ENCODE measurements at regions of chr14 and their contacts with region 1.

Region 1: GRCh38 chr14:20613094-20614037 is 22.2 kb upstream of the RNASE12 start:
- DNase-seq: peak; percentile 65 to 95 (median 78)
- ATAC-seq: peak; percentile 83
- H3K4me3 ChIP-seq: peak overlapping the region; percentile 64
- H3K4me3 Mint-ChIP-seq: no peak overlapping the region
- H3K27ac ChIP-seq: peak overlapping the region in 1 of 2 donors; percentile 43
- H3K27ac Mint-ChIP-seq: no peak overlapping the region
- H3K4me1 ChIP-seq: peaks cover 37% of the 10 kb centered on the region
- H3K4me1 Mint-ChIP-seq: no peaks in the 10 kb centered on the region
- H3K27me3 ChIP-seq: no peaks in the 10 kb centered on the region
- H3K27me3 Mint-ChIP-seq: peaks cover 7% of the 10 kb centered on the region
- CTCF ChIP-seq: peak; percentile 55

Region 2: DNA sequence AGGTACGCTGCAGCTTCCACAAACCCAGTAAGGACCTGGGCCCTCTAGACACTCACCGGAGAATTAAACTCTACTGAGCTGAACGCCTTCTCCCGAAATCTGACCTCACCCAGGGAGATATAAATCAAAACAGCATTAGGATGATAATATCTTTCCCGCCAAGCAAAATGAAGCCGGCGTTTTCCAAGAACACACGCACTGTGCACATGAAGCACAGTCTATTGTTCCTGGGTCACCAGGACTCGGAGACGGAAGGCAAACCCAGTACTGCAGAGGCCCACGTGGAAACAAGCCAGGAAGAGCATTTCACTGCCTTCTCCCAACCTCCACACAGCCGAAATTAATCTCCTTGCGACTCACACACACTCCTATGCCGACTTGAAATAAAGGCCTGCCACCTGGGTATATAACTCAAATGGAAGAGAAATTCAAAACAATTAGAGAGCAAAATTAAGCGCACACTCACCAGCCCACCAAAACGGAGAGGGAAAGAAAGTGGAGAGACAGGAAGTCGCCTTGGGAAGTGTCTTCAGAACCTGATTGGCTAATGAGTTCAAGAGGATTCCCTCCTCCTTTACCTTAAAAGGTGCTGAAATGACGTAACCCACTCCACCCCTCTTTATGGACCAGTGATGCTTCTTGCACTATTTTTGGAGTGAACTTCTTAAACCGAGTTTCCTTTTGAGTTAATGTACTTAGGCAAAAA is 280.4 kb before region 1 on chr14 and contains the start of gene CCNB1IP1:
- CTCF ChIA-PET with region 1: interaction called, 13 read pairs
- POLR2A ChIA-PET with region 1: interaction called, 19 read pairs
- intact Hi-C with region 1: no loop called
- DNase-seq: peak in 13 of 14 experiments; percentile 5 to 91 (median 26)
- ATAC-seq: peak; percentile 99
- H3K4me3 ChIP-seq: peak within 1 kb of the TSS; percentile 75
- H3K4me3 Mint-ChIP-seq: peak within 1 kb of the TSS; percentile 94
- H3K27ac ChIP-seq: peak within 1 kb of the TSS; percentile 3 to 59
- H3K27ac Mint-ChIP-seq: peak within 1 kb of the TSS; percentile 84
- H3K4me1 ChIP-seq: peaks cover 12% of the 10 kb centered on the region
- H3K4me1 Mint-ChIP-seq: peaks cover 34% of the 10 kb centered on the region
- H3K27me3 ChIP-seq: no peaks in the 10 kb centered on the region
- H3K27me3 Mint-ChIP-seq: no peaks in the 10 kb centered on the region
- CTCF ChIP-seq: no peak
- total RNA-seq, gene CCNB1IP1: 26.2 to 27.4 TPM

Region 3: DNA sequence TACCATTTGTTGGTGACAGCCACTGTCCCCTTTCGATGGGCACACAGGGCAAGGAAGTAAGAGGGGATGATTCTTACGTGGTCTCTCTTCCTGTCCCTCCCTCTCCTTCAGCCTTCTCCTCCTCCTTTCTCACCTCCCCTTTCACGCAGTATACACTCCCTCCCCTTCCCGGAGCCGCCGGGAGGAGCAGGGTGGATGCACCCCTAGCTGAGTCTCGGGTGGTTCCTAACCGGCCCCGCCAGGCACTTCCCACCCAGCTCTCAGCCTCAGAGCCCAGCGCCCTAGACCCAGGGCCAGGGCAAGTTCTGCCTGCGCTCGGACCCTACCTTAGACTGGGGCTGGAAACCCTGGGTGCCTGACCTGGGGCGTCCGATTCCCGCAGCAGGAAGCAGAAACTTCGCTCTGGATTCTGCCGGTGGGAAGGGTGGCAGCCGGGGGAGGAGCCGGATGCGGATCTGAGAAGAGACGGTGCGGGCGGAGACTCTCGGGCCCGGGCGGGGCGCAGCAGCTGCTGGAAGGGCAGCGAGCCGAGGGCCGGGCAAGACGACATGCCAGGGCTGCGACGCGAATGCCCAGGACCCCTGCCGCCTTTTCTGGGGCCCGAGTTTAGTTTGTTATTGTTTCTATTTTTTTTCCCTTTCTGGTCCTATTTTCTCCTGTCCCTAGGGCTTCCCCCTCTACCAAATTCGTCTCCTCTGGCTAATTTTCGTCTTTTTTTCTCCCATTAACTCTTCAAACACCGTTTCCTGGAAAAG is 200.1 kb before region 1 on chr14 and contains the start of gene TEP1:
- CTCF ChIA-PET with region 1: interaction called, 14 read pairs
- POLR2A ChIA-PET with region 1: interaction called, 10 read pairs
- intact Hi-C with region 1: loop called (anchors 1 to 2 kb)
- DNase-seq: peak; percentile 47 to 81 (median 66)
- ATAC-seq: peak; percentile 72
- H3K4me3 ChIP-seq: peak within 1 kb of the TSS; percentile 96
- H3K4me3 Mint-ChIP-seq: peak within 1 kb of the TSS; percentile 98
- H3K27ac ChIP-seq: peak within 1 kb of the TSS; percentile 80 to 90
- H3K27ac Mint-ChIP-seq: peak within 1 kb of the TSS; percentile 80
- H3K4me1 ChIP-seq: peaks cover 19% of the 10 kb centered on the region
- H3K4me1 Mint-ChIP-seq: peaks cover 49% of the 10 kb centered on the region
- H3K27me3 ChIP-seq: no peaks in the 10 kb centered on the region
- H3K27me3 Mint-ChIP-seq: no peaks in the 10 kb centered on the region
- CTCF ChIP-seq: no peak
- total RNA-seq, gene TEP1: 14.3 to 17.4 TPM

Region 4: GRCh38 chr14:20461274-20462001 is 151.9 kb before region 1 on chr14 and contains the start of gene PIP4P1:
- CTCF ChIA-PET with region 1: interaction called, 3 read pairs
- POLR2A ChIA-PET with region 1: interaction called, 10 read pairs
- intact Hi-C with region 1: no loop called
- DNase-seq: peak; percentile 94 to 100 (median 97)
- ATAC-seq: peak; percentile 86
- H3K4me3 ChIP-seq: peak within 1 kb of the TSS; percentile 69
- H3K4me3 Mint-ChIP-seq: peak within 1 kb of the TSS; percentile 95
- H3K27ac ChIP-seq: peak within 1 kb of the TSS; percentile 94 to 97
- H3K27ac Mint-ChIP-seq: peak within 1 kb of the TSS; percentile 87
- H3K4me1 ChIP-seq: peaks cover 41% of the 10 kb centered on the region
- H3K4me1 Mint-ChIP-seq: peaks cover 26% of the 10 kb centered on the region
- H3K27me3 ChIP-seq: no peaks in the 10 kb centered on the region
- H3K27me3 Mint-ChIP-seq: no peaks in the 10 kb centered on the region
- CTCF ChIP-seq: no peak
- total RNA-seq, gene PIP4P1: 83.9 to 107 TPM

Region 5: GRCh38 chr14:20591241-20591640 is 22.1 kb before region 1 on chr14 and contains the start of gene RNASE12:
- CTCF ChIA-PET with region 1: no interaction called
- POLR2A ChIA-PET with region 1: no interaction called
- intact Hi-C with region 1: no loop called
- DNase-seq: no peak
- ATAC-seq: no peak
- H3K4me3 ChIP-seq: no peak within 1 kb of the TSS
- H3K4me3 Mint-ChIP-seq: no peak within 1 kb of the TSS
- H3K27ac ChIP-seq: no peak within 1 kb of the TSS
- H3K27ac Mint-ChIP-seq: no peak within 1 kb of the TSS
- H3K4me1 ChIP-seq: no peaks in the 10 kb centered on the region
- H3K4me1 Mint-ChIP-seq: peaks cover 6% of the 10 kb centered on the region
- H3K27me3 ChIP-seq: peaks cover 0 to 3% of the 10 kb centered on the region in 2 experiments
- H3K27me3 Mint-ChIP-seq: peaks cover 16% of the 10 kb centered on the region
- CTCF ChIP-seq: no peak
- total RNA-seq, gene RNASE12: not detected

Region 6: DNA sequence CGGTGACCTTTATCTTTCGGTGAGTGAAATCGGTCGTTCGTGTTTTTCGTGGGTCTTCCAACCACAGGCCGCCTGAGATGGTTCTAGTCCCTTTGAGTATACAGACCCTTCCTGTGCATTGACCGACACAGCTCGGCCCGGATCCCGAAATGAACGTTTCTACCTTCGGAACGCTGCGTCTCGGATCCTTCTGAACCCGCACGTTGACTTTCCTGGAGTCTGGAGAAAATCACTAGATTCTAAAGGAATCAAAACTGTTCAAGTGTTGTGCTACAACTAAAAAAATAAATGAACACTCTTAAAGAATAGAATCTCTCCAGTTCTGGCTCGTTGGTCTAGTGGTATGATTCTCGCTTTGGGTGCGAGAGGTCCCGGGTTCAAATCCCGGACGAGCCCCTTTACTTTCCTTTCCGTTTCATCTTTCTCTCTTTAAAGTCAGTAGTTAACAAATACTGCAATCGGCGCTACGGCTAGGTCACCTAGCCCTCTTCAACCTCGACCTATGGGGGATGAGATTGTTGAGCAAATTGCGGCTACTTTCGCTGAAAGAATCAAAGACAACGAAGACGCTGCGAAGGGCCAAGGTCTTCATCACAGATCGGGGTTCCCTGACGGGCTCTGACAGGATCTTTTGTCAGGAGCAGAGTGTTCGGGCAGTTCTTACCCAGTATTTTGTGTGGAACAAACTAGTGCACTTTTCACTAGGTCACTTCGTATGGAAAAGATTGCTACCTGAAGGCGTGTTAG is 19.5 kb after region 1 on chr14:
- CTCF ChIA-PET with region 1: interaction called, 13 read pairs
- POLR2A ChIA-PET with region 1: interaction called, 42 read pairs
- intact Hi-C with region 1: loop called (anchors 1 to 2 kb)
- DNase-seq: peak in 11 of 14 experiments; percentile 15 to 84 (median 50)
- ATAC-seq: peak; percentile 58
- H3K4me3 ChIP-seq: peak overlapping the region; percentile 59
- H3K4me3 Mint-ChIP-seq: peak overlapping the region; percentile 97
- H3K27ac ChIP-seq: no peak overlapping the region
- H3K27ac Mint-ChIP-seq: peak overlapping the region; percentile 94
- H3K4me1 ChIP-seq: peaks cover 34% of the 10 kb centered on the region
- H3K4me1 Mint-ChIP-seq: peaks cover 54% of the 10 kb centered on the region
- H3K27me3 ChIP-seq: peaks cover 0 to 7% of the 10 kb centered on the region in 2 experiments
- H3K27me3 Mint-ChIP-seq: peaks cover 27% of the 10 kb centered on the region
- CTCF ChIP-seq: no peak

Region 7: DNA sequence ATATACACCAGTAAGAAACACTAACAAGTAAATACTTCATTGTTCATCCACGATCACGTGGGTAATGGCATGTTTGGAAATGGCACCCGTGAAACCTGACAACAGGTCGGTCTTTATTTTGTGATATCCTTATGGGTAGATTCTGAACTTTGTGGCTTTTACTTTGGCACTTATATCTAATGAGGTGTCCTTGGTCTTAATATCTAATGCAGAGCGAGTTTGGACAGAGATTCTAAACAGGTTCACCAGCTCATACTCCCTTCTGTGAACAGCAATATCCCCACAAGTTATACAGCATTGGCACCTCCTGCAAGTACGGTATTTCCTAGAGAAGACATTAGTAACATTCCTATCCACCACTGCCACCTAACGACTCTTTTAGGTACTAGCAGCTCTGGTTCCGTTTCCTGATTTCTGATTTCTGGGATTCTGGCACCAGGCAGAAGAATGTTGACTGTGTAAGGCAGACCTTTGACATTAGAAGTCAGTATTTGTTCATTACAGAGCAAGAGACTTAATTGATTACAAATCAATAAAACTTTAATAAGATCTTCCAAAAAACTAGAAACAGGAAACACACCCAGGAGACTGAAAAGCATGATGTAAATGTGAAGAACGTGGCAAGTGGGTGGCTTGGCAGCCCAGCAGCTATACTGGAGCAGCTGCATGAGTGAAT is 77.6 kb after region 1 on chr14:
- CTCF ChIA-PET with region 1: interaction called, 15 read pairs
- POLR2A ChIA-PET with region 1: interaction called, 4 read pairs
- intact Hi-C with region 1: loop called in 1 of 2 experiments (anchors 2 kb)
- DNase-seq: peak in 10 of 14 experiments; percentile 7 to 85 (median 30)
- ATAC-seq: peak; percentile 99
- H3K4me3 ChIP-seq: no peak overlapping the region
- H3K4me3 Mint-ChIP-seq: no peak overlapping the region
- H3K27ac ChIP-seq: no peak overlapping the region
- H3K27ac Mint-ChIP-seq: no peak overlapping the region
- H3K4me1 ChIP-seq: no peaks in the 10 kb centered on the region
- H3K4me1 Mint-ChIP-seq: peaks cover 6% of the 10 kb centered on the region
- H3K27me3 ChIP-seq: no peaks in the 10 kb centered on the region
- H3K27me3 Mint-ChIP-seq: no peaks in the 10 kb centered on the region
- CTCF ChIP-seq: peak; percentile 93

Region 8: GRCh38 chr14:20830831-20831230 is 217.5 kb after region 1 on chr14:
- CTCF ChIA-PET with region 1: no interaction called
- POLR2A ChIA-PET with region 1: no interaction called
- intact Hi-C with region 1: no loop called
- DNase-seq: no peak
- ATAC-seq: no peak
- H3K4me3 ChIP-seq: no peak overlapping the region
- H3K4me3 Mint-ChIP-seq: no peak overlapping the region
- H3K27ac ChIP-seq: no peak overlapping the region
- H3K27ac Mint-ChIP-seq: no peak overlapping the region
- H3K4me1 ChIP-seq: no peaks in the 10 kb centered on the region
- H3K4me1 Mint-ChIP-seq: no peaks in the 10 kb centered on the region
- H3K27me3 ChIP-seq: no peaks in the 10 kb centered on the region
- H3K27me3 Mint-ChIP-seq: no peaks in the 10 kb centered on the region
- CTCF ChIP-seq: no peak